Adrenal gland (tissue), 19 donors: ENCODE measurements at regions of chr9 and their contacts with region 1.

Region 1: GRCh38 chr9:129884220-129885017 is 49.2 kb downstream of the USP20 start:
- DNase-seq: peak; percentile 84 to 93 (median 91)
- H3K4me3 ChIP-seq: peak overlapping the region in 2 of 4 donors; percentile 34 to 48
- H3K27ac ChIP-seq: peak overlapping the region in 4 of 5 donors; percentile 60 to 82 (median 74)
- H3K4me1 ChIP-seq: peaks cover 16 to 42% of the 10 kb centered on the region in 2 donors
- H3K27me3 ChIP-seq: no peaks in the 10 kb centered on the region
- CTCF ChIP-seq: peak in 1 of 6 experiments; percentile 4
- POLR2A ChIP-seq: peak in 1 of 2 donors; percentile 64

Region 2: DNA sequence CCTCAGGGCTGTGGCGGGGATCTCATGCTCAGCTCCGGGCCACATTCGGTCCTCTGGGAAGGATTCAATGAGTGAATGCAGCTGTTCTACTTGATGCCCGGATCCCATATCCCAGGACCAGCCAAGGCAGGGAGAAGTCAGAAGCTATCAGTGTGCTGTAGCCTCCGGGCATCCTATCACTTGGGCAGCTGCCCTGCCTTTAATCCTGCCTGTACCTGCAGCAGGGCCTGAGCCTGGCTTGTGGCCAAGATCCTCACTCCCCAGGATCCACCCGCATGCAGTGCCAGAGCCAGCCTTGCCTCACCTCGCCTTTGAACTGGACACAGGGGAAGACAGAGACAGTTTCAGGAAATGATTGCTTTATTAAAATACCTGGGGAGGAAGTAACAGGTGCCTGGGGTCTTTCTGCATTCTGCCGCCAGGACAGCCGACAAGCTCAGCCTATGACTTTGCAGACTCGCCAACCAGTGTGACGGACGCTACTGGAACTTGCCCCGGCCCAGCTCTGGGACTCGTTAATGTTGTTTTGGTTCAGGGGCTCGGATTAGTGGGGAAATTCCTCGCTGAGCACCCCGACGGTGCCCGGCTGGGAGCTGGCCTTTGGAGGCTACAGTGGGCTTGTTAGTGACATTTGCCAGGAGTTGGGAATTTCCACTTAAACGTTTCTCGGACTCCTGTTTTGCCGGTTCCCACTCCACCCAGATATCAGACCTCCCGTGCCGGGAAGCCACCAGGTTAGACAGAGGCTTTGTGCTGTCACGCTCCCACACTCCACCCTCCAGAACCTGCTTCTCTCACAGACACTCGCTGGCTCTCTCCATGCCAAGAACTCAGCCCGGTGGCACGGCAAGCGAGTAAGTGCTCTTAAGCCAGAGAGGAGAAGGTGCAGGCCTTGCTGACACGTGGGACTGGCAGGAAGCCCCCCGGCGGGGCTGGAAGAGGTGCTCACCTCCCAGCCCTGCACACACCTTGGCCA is 132.3 kb before region 1 on chr9:
- intact Hi-C with region 1: no loop called
- DNase-seq: peak in 1 of 7 donors; percentile 81
- H3K4me3 ChIP-seq: peak overlapping the region in 1 of 4 donors; percentile 23
- H3K27ac ChIP-seq: peak overlapping the region in 1 of 5 donors; percentile 20
- H3K4me1 ChIP-seq: peaks cover 0 to 15% of the 10 kb centered on the region in 2 donors
- H3K27me3 ChIP-seq: no peaks in the 10 kb centered on the region
- CTCF ChIP-seq: no peak
- POLR2A ChIP-seq: no peak

Region 3: DNA sequence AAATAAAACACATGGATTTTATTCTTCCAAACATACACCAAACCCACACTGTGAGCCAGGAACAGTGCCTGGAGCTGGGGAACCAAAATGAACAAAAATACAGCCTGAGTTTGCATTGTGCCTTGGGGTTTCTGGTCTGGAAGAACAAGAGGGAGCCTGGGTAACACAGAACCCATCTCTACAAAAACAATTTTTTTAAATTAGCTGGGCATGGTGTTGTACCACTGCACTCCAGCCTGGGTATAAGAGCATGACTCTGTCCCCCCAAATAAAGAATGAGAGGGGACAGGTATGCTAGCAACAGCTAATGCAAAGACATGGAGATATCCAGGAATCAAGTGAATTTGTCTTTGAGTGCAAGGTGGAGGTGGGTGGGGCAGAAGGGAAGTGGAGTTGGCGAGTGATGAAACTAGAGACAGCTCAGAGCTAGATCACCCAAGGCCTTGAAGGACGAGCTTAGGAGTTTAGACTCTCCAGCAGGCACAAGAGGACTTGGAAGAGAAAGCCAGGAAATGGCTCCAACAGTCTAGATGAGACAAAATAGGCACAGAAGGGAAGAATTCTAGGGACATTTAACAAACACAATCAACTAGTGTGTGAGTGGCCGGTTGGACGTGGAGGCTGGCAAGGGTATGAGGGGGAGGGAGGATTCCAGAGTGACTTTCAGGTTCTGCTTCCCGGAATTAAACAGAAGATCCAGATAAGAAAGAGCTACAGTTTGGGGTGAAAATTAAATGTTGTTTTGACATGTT is 111.2 kb after region 1 on chr9:
- intact Hi-C with region 1: no loop called
- DNase-seq: peak in 5 of 7 donors; percentile 27 to 46 (median 34)
- H3K4me3 ChIP-seq: no peak overlapping the region
- H3K27ac ChIP-seq: peak overlapping the region; percentile 7 to 76 (median 49)
- H3K4me1 ChIP-seq: peaks cover 13 to 15% of the 10 kb centered on the region in 2 donors
- H3K27me3 ChIP-seq: no peaks in the 10 kb centered on the region
- CTCF ChIP-seq: no peak
- POLR2A ChIP-seq: no peak

Region 4: GRCh38 chr9:130042833-130043653 is 158.6 kb after region 1 on chr9 and contains the start of gene FNBP1:
- intact Hi-C with region 1: loop called in 1 of 2 experiments (anchors 5 kb)
- DNase-seq: peak; percentile 76 to 87 (median 82)
- H3K4me3 ChIP-seq: peak within 1 kb of the TSS; percentile 37 to 95 (median 77)
- H3K27ac ChIP-seq: peak within 1 kb of the TSS; percentile 57 to 96 (median 89)
- H3K4me1 ChIP-seq: peaks cover 10 to 41% of the 10 kb centered on the region in 2 donors
- H3K27me3 ChIP-seq: no peaks in the 10 kb centered on the region
- CTCF ChIP-seq: peak in 2 of 6 experiments; percentile 17 to 21
- POLR2A ChIP-seq: peak; percentile 66 to 75
- total RNA-seq, gene FNBP1: 22.6 to 40.4 (median 24.3) TPM

Region 5: DNA sequence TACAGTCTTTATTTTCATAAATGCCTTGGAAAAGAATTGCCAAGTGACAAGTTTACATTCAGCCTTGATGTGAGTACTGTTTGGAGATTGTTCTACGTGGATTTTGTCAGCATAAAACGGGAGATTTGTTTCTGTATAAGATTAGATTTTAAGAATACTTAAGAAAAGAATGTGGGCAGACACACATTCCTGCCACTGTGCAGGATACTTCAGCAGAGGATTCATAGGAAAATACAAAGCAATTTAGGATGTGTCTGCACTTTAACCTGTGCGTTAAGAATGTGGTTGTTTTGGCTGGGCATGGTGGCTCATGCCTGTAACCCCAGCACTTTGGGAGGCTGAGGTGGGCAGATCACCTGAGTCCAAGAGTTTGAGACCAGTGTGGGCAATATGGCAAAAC is 206.5 kb after region 1 on chr9:
- intact Hi-C with region 1: loop called (anchors 5 to 10 kb)
- DNase-seq: no peak
- H3K4me3 ChIP-seq: no peak overlapping the region
- H3K27ac ChIP-seq: no peak overlapping the region
- H3K4me1 ChIP-seq: no peaks in the 10 kb centered on the region
- H3K27me3 ChIP-seq: no peaks in the 10 kb centered on the region
- CTCF ChIP-seq: no peak
- POLR2A ChIP-seq: no peak

Region 6: GRCh38 chr9:130235897-130236668 is 351.7 kb after region 1 on chr9:
- intact Hi-C with region 1: loop called in 1 of 2 experiments (anchors 5 kb)
- DNase-seq: peak; percentile 53 to 88 (median 69)
- H3K4me3 ChIP-seq: no peak overlapping the region
- H3K27ac ChIP-seq: peak overlapping the region in 1 of 5 donors; percentile 41
- H3K4me1 ChIP-seq: peaks cover 9 to 20% of the 10 kb centered on the region in 2 donors
- H3K27me3 ChIP-seq: no peaks in the 10 kb centered on the region
- CTCF ChIP-seq: peak; percentile 97 to 100 (median 98)
- POLR2A ChIP-seq: no peak